ENCODE measurements at regions of chr6 and their contacts with region 1.

Region 1: DNA sequence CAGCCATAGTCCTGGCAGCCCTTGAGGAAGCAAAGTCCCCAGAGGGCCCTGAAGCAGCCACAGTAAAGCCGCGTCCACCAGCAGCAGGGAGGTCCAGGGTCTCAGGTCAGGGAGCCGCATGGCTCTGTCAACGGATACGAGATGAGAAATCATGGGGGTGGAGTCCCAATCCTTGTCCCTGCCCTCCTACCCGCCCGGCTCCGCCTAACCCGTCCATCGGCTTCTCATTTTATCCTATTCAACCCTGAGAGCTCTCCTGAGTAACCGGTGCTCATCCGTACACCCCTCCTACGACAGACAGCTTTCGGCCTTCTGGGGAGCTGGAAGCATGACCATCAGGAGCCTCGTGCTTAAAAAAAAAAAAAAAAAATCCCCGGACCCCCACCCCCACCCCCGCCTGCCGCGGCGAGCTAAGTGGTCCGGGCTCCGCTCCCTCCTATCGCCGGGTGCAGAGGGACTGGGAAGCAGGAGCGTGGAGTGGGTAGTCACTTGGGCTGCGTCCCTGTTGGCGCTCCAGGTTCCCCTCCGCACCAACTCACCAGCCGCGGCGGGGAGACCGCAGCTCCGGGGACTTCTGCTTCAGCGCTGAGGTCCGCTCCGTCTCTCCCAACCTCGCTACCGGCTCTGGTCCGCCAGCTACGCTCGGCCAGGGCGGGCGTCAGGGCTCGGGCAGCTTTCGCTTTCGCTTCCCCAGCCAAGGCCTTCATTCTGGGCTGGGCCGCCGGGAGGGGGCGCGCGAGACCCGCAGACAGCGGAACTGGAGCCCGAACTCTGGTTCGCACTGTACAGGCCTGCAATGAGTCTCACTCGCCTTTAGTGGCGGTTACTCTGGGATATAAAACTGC is at the start of gene TAP2:
- DNase-seq: peak; percentile 94
- H3K4me3 ChIP-seq: peak within 1 kb of the TSS; percentile 30 to 89 (median 70)
- H3K27ac ChIP-seq: peak within 1 kb of the TSS; percentile 54
- H3K4me1 ChIP-seq: peaks cover 9% of the 10 kb centered on the region
- H3K27me3 ChIP-seq: no peaks in the 10 kb centered on the region
- CTCF ChIP-seq: peak; percentile 92 to 99
- POLR2A ChIP-seq: peak; percentile 64
- total RNA-seq, gene TAP2: 49.7 and 57.8 TPM in 2 replicates

Region 2: DNA sequence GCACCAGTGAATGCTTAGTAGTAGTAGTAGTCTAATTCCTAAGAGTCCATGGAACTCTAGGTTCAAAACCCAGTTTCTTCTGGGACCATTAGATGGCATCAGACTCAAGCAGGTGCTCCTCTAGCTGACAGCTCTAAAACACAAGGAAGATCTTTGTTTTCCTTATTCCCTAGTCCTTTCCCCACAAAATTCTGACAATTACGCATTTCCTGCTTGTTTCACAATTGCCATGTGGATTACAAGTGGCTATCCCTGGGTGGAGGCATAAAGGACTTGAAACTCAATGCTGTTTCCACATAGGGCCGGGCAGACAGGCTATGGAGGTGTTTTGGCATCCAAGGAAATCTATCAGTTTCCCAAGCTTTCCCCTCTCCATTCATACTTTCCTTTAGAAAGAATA is 12.4 kb before region 1 on chr6:
- CTCF ChIA-PET with region 1: interaction called, 57 read pairs
- POLR2A ChIA-PET with region 1: no interaction called
- dilution Hi-C with region 1: no loop called
- intact Hi-C with region 1: no loop called
- DNase-seq: peak; percentile 48
- H3K4me3 ChIP-seq: no peak overlapping the region
- H3K27ac ChIP-seq: no peak overlapping the region
- H3K4me1 ChIP-seq: no peaks in the 10 kb centered on the region
- H3K27me3 ChIP-seq: no peaks in the 10 kb centered on the region
- CTCF ChIP-seq: peak; percentile 13 to 20
- POLR2A ChIP-seq: no peak

Region 3: GRCh38 chr6:32853541-32854375 is 15.4 kb after region 1 on chr6 and contains the starts of genes PSMB9 and TAP1:
- CTCF ChIA-PET with region 1: interaction called, 274 read pairs
- POLR2A ChIA-PET with region 1: interaction called, 12 read pairs
- dilution Hi-C with region 1: no loop called
- intact Hi-C with region 1: loop called (anchors 1 kb)
- DNase-seq: peak; percentile 96
- H3K4me3 ChIP-seq: peak within 1 kb of the TSS; percentile 63 to 83 (median 75)
- H3K27ac ChIP-seq: peak within 1 kb of the TSS; percentile 18
- H3K4me1 ChIP-seq: peaks cover 13% of the 10 kb centered on the region
- H3K27me3 ChIP-seq: peaks cover 2 to 15% of the 10 kb centered on the region in 2 experiments
- CTCF ChIP-seq: peak; percentile 82 to 86
- POLR2A ChIP-seq: peak; percentile 64
- total RNA-seq, gene PSMB9: 2.7 and 6.3 TPM in 2 replicates
- total RNA-seq, gene TAP1: 18.8 and 25.9 TPM in 2 replicates

Region 4: GRCh38 chr6:32862725-32863124 is 24.4 kb after region 1 on chr6:
- CTCF ChIA-PET with region 1: interaction called, 397 read pairs
- POLR2A ChIA-PET with region 1: interaction called, 8 read pairs
- dilution Hi-C with region 1: no loop called
- intact Hi-C with region 1: no loop called
- DNase-seq: no peak
- H3K4me3 ChIP-seq: no peak overlapping the region
- H3K27ac ChIP-seq: no peak overlapping the region
- H3K4me1 ChIP-seq: no peaks in the 10 kb centered on the region
- H3K27me3 ChIP-seq: peaks cover 19 to 20% of the 10 kb centered on the region in 2 experiments
- CTCF ChIP-seq: no peak
- POLR2A ChIP-seq: no peak

Region 5: GRCh38 chr6:32894080-32895005 is 56.0 kb after region 1 on chr6:
- CTCF ChIA-PET with region 1: interaction called, 11 read pairs
- POLR2A ChIA-PET with region 1: no interaction called
- dilution Hi-C with region 1: no loop called
- intact Hi-C with region 1: no loop called
- DNase-seq: peak; percentile 98
- H3K4me3 ChIP-seq: peak overlapping the region; percentile 24 to 67 (median 61)
- H3K27ac ChIP-seq: peak overlapping the region; percentile 45
- H3K4me1 ChIP-seq: peaks cover 17% of the 10 kb centered on the region
- H3K27me3 ChIP-seq: peaks cover 0 to 1% of the 10 kb centered on the region in 2 experiments
- CTCF ChIP-seq: no peak
- POLR2A ChIP-seq: peak; percentile 72

Region 6: GRCh38 chr6:32952817-32953739 is 114.7 kb after region 1 on chr6 and contains the start of gene HLA-DMA:
- CTCF ChIA-PET with region 1: interaction called, 18 read pairs
- POLR2A ChIA-PET with region 1: no interaction called
- dilution Hi-C with region 1: no loop called
- intact Hi-C with region 1: no loop called
- DNase-seq: peak; percentile 96
- H3K4me3 ChIP-seq: no peak within 1 kb of the TSS
- H3K27ac ChIP-seq: no peak within 1 kb of the TSS
- H3K4me1 ChIP-seq: no peaks in the 10 kb centered on the region
- H3K27me3 ChIP-seq: no peaks in the 10 kb centered on the region
- CTCF ChIP-seq: peak; percentile 80 to 81
- POLR2A ChIP-seq: no peak
- total RNA-seq, gene HLA-DMA: 0.53 and 1.2 TPM in 2 replicates

Region 7: GRCh38 chr6:33132081-33132524 is 293.8 kb after region 1 on chr6:
- CTCF ChIA-PET with region 1: no interaction called
- POLR2A ChIA-PET with region 1: no interaction called
- dilution Hi-C with region 1: no loop called
- intact Hi-C with region 1: no loop called
- DNase-seq: no peak
- H3K4me3 ChIP-seq: no peak overlapping the region
- H3K27ac ChIP-seq: no peak overlapping the region
- H3K4me1 ChIP-seq: no peaks in the 10 kb centered on the region
- H3K27me3 ChIP-seq: peaks cover 21 to 31% of the 10 kb centered on the region in 2 experiments
- CTCF ChIP-seq: no peak
- POLR2A ChIP-seq: no peak

Measured in endothelial cell of umbilical vein (primary cell).